A673 (cell line): ENCODE measurements at regions of chr11 and their contacts with region 1.

Region 1: DNA sequence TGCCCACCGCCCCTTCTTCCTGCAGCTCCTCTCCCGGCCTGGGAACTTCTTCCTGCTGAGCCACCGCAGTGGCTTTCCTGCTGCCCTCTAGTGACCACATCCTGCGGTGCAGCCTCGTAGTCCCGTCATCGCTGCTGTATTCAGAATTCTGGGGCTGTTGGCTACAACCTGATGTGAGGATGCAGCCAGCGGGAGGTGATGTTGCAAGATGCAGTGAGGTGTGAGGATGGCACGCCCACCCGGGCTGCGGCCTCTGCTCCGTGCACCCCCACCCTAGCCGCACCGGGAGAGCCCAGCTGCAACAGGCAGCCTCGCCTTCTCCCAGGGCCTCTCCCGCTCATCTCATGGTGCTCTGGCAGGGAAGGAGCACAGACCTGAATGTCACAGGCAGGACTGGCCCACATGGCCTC is 10.1 kb downstream of the CHST1 start:
- DNase-seq: peak; percentile 93
- H3K4me3 ChIP-seq: no peak overlapping the region
- H3K27ac ChIP-seq: no peak overlapping the region
- H3K4me1 ChIP-seq: peaks cover 6% of the 10 kb centered on the region
- H3K27me3 ChIP-seq: no peaks in the 10 kb centered on the region
- CTCF ChIP-seq: peak; percentile 100

Region 2: GRCh38 chr11:44120169-44120568 is 1535.2 kb before region 1 on chr11:
- CTCF ChIA-PET with region 1: interaction called, 10 read pairs
- POLR2A ChIA-PET with region 1: no interaction called
- intact Hi-C with region 1: no loop called
- DNase-seq: no peak
- H3K4me3 ChIP-seq: no peak overlapping the region
- H3K27ac ChIP-seq: no peak overlapping the region
- H3K4me1 ChIP-seq: peaks cover 6% of the 10 kb centered on the region
- H3K27me3 ChIP-seq: no peaks in the 10 kb centered on the region
- CTCF ChIP-seq: peak; percentile 65

Region 3: GRCh38 chr11:45371251-45372115 is 283.9 kb before region 1 on chr11:
- CTCF ChIA-PET with region 1: interaction called, 54 read pairs
- POLR2A ChIA-PET with region 1: no interaction called
- intact Hi-C with region 1: loop called (anchors 1 kb)
- DNase-seq: peak; percentile 91
- H3K4me3 ChIP-seq: no peak overlapping the region
- H3K27ac ChIP-seq: no peak overlapping the region
- H3K4me1 ChIP-seq: peaks cover 15% of the 10 kb centered on the region
- H3K27me3 ChIP-seq: no peaks in the 10 kb centered on the region
- CTCF ChIP-seq: peak; percentile 100

Region 4: DNA sequence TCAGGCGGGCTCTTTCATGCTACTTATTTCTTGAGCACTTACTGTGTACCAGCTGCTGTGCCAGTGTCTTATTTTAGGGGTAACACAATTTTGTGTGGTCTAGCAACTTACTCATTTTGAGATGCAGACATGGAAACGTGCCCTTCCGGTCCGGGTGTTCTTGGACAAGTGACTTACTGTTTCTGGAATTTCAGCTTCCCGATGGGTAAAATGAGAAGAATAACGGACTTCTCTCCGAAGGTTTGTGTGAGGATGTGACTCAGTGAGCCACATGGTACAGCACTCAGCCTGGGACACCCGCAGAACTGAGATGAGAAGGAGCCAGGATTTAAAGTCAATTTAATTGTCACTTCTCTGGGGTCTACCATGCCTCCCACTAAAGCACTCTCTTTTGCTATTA is 254.8 kb before region 1 on chr11:
- CTCF ChIA-PET with region 1: interaction called, 11 read pairs
- POLR2A ChIA-PET with region 1: no interaction called
- intact Hi-C with region 1: no loop called
- DNase-seq: peak; percentile 42
- H3K4me3 ChIP-seq: no peak overlapping the region
- H3K27ac ChIP-seq: no peak overlapping the region
- H3K4me1 ChIP-seq: peaks cover 8% of the 10 kb centered on the region
- H3K27me3 ChIP-seq: no peaks in the 10 kb centered on the region
- CTCF ChIP-seq: no peak

Region 5: GRCh38 chr11:45500451-45500850 is 154.9 kb before region 1 on chr11:
- CTCF ChIA-PET with region 1: no interaction called
- POLR2A ChIA-PET with region 1: no interaction called
- intact Hi-C with region 1: no loop called
- DNase-seq: no peak
- H3K4me3 ChIP-seq: no peak overlapping the region
- H3K27ac ChIP-seq: no peak overlapping the region
- H3K4me1 ChIP-seq: no peaks in the 10 kb centered on the region
- H3K27me3 ChIP-seq: peaks cover 27% of the 10 kb centered on the region
- CTCF ChIP-seq: no peak